Activated CD4-positive, alpha-beta memory T cell treated with anti-CD3 and anti-CD28 coated beads, Interleukin-2, amount 10 ng/mL, durations not matched to agents 7 days and 5 days (primary cell): ENCODE measurements at regions of chr16 and their contacts with region 1.

Region 1: GRCh38 chr16:50665128-50665878 is 15.8 kb downstream of the SNX20 start:
- DNase-seq: peak; percentile 88
- H3K4me3 Mint-ChIP-seq: peak overlapping the region; percentile 57
- H3K27ac Mint-ChIP-seq: peak overlapping the region; percentile 94
- H3K4me1 Mint-ChIP-seq: peaks cover 47% of the 10 kb centered on the region
- H3K27me3 Mint-ChIP-seq: no peaks in the 10 kb centered on the region

Region 2: GRCh38 chr16:50326949-50327402 is 338.3 kb before region 1 on chr16:
- CTCF ChIA-PET with region 1: interaction called, 57 read pairs
- POLR2A ChIA-PET with region 1: interaction called, 7 read pairs
- DNase-seq: peak; percentile 82
- H3K4me3 Mint-ChIP-seq: no peak overlapping the region
- H3K27ac Mint-ChIP-seq: peak overlapping the region; percentile 85
- H3K4me1 Mint-ChIP-seq: peaks cover 72% of the 10 kb centered on the region
- H3K27me3 Mint-ChIP-seq: no peaks in the 10 kb centered on the region

Region 3: GRCh38 chr16:50368410-50369132 is 296.7 kb before region 1 on chr16 and contains the start of gene BRD7:
- CTCF ChIA-PET with region 1: interaction called, 23 read pairs
- POLR2A ChIA-PET with region 1: interaction called, 7 read pairs
- DNase-seq: peak; percentile 80
- H3K4me3 Mint-ChIP-seq: peak within 1 kb of the TSS; percentile 85
- H3K27ac Mint-ChIP-seq: peak within 1 kb of the TSS; percentile 71
- H3K4me1 Mint-ChIP-seq: peaks cover 46% of the 10 kb centered on the region
- H3K27me3 Mint-ChIP-seq: peaks cover 4% of the 10 kb centered on the region
- total RNA-seq, gene BRD7: 93.3 to 101 TPM

Region 4: GRCh38 chr16:50653633-50654519 is 11.4 kb before region 1 on chr16:
- CTCF ChIA-PET with region 1: interaction called, 17 read pairs
- POLR2A ChIA-PET with region 1: interaction called, 5 read pairs
- DNase-seq: no peak
- H3K4me3 Mint-ChIP-seq: no peak overlapping the region
- H3K27ac Mint-ChIP-seq: no peak overlapping the region
- H3K4me1 Mint-ChIP-seq: no peaks in the 10 kb centered on the region
- H3K27me3 Mint-ChIP-seq: no peaks in the 10 kb centered on the region

Region 5: DNA sequence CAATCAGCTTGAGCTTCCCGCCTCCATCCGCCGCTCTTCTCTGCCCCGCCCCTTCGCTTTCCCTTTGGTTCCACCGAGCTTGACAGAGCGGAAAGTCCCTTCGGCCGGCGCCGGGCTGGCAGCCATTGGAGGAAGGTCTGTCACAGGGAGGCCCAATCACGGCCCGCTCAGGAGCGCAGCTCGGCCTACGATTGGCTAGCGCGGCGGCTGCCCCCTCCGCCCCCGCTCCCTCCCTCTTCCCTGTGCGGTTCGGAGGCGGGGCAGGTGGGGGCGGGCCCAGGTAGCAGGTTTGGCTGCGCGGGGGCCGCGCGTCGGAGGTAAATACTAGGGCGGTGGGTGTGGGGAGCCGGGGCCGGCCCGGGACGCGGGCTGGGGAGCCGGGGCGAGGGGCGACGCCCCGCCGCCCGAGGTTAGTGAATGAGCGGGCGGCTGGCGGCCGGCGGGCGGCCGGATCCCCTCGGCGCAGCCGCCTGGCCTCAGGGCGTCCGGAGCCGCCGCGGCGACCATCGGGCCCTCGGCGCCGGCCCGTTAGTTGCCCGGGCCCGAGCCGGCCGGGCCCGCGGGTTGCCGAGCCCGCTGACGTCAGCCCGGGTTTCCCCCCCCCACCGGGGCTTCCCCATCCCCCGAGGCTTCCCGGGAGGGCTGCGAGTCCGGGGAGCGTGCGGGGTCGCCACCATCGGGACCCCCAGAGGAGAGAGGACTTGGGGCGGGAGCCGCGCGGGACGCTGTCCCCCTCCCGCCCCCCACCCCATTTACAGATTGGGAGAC is 76.7 kb after region 1 on chr16 and contains the start of gene CYLD:
- CTCF ChIA-PET with region 1: interaction called, 240 read pairs
- POLR2A ChIA-PET with region 1: interaction called, 180 read pairs
- DNase-seq: peak; percentile 100
- H3K4me3 Mint-ChIP-seq: peak within 1 kb of the TSS; percentile 94
- H3K27ac Mint-ChIP-seq: peak within 1 kb of the TSS; percentile 94
- H3K4me1 Mint-ChIP-seq: peaks cover 39% of the 10 kb centered on the region
- H3K27me3 Mint-ChIP-seq: no peaks in the 10 kb centered on the region
- total RNA-seq, gene CYLD: 235 to 254 TPM

Region 6: DNA sequence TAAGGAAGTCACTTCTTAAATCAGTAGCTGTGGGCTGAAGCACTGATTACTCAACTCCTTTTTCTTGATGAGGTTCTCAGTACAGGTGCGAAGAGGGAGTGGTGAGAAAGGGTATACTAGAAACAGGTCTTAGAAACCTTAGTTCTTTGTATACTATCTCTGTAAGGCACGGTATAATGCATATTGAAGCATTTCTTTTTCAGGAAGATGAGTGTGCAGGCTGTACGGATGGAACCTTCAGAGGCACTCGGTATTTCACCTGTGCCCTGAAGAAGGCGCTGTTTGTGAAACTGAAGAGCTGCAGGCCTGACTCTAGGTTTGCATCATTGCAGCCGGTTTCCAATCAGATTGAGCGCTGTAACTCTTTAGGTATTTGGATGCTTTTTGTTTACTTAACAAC is 115.7 kb after region 1 on chr16:
- CTCF ChIA-PET with region 1: interaction called, 16 read pairs
- POLR2A ChIA-PET with region 1: interaction called, 4 read pairs
- DNase-seq: peak; percentile 36
- H3K4me3 Mint-ChIP-seq: peak overlapping the region; percentile 56
- H3K27ac Mint-ChIP-seq: peak overlapping the region; percentile 95
- H3K4me1 Mint-ChIP-seq: peaks cover 57% of the 10 kb centered on the region
- H3K27me3 Mint-ChIP-seq: no peaks in the 10 kb centered on the region